ENCODE measurements at regions of chr10 and their contacts with region 1.

Region 1: DNA sequence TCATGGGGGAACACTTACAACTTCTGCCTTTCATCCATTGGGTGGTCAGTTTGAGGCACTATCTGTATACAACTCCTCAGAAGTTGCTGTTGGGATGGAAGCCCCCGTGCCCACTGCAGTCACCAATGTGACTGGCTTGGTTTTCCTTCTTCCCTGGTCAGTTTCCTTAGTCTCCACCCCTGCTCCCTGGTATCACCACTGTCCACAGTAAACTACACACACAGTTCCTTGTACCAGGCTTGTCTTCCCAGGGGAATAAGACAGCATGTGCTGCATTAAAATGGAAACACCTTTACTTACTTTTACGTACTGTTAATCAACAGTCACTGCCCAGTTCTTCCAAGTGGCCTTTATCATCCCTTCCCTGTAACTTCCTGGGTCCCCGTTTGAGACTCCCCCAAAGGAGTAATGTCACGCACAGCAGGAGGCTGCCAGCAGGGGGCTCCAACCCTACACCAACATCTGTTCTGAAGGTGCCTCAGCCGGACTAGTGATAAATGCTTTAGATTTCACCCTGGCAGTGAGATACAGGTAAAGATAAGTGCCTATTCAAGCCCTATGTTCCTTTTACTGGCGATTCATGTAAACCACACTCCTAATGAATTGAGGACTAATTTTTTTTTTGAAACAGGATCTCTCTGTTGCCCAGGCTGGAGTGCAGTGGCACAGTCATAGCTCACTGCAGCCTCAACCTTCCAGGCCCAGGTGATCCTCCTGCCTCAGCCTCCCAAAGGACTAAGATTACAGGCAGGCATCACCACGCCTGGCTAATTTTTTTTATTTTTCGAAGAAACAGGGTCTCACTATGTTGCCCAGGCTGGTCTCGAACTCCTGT is 45.3 kb upstream of the PIK3AP1 start:
- DNase-seq: peak; percentile 61 to 83 (median 70)
- ATAC-seq: peak; percentile 94
- H3K4me3 ChIP-seq: no peak overlapping the region
- H3K4me3 Mint-ChIP-seq: no peak overlapping the region
- H3K27ac ChIP-seq: no peak overlapping the region
- H3K27ac Mint-ChIP-seq: no peak overlapping the region
- H3K4me1 ChIP-seq: peaks cover 3% of the 10 kb centered on the region
- H3K4me1 Mint-ChIP-seq: no peaks in the 10 kb centered on the region
- H3K27me3 ChIP-seq: no peaks in the 10 kb centered on the region
- H3K27me3 Mint-ChIP-seq: peaks cover 4% of the 10 kb centered on the region
- CTCF ChIP-seq: peak; percentile 95

Region 2: DNA sequence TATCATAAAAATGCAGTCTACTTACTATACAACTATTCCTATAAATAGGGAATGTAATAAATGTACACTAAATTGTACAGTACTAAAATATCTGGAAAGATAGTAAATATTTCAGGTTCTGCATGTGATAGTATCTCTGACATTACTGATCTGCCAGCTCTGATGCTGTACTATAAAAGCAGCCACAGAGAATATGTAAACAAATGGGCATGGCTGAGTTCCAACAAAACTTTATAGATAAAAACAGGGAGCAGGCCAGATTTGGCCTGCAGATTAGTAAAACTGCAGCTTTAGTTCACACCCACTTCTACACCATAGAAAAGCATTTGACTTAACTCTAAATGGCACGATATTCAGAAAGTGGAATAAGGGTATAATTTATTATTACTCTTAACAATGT is 233.1 kb before region 1 on chr10:
- CTCF ChIA-PET with region 1: no interaction called
- POLR2A ChIA-PET with region 1: no interaction called
- intact Hi-C with region 1: no loop called
- DNase-seq: no peak
- ATAC-seq: no peak
- H3K4me3 ChIP-seq: no peak overlapping the region
- H3K4me3 Mint-ChIP-seq: no peak overlapping the region
- H3K27ac ChIP-seq: no peak overlapping the region
- H3K27ac Mint-ChIP-seq: no peak overlapping the region
- H3K4me1 ChIP-seq: no peaks in the 10 kb centered on the region
- H3K4me1 Mint-ChIP-seq: peaks cover 9% of the 10 kb centered on the region
- H3K27me3 ChIP-seq: no peaks in the 10 kb centered on the region
- H3K27me3 Mint-ChIP-seq: no peaks in the 10 kb centered on the region
- CTCF ChIP-seq: no peak

Region 3: GRCh38 chr10:97025613-97026242 is 260.1 kb after region 1 on chr10:
- CTCF ChIA-PET with region 1: interaction called, 3 read pairs
- POLR2A ChIA-PET with region 1: no interaction called
- intact Hi-C with region 1: loop called in 1 of 2 experiments (anchors 2 kb)
- DNase-seq: peak in 13 of 14 experiments; percentile 12 to 72 (median 32)
- ATAC-seq: no peak
- H3K4me3 ChIP-seq: no peak overlapping the region
- H3K4me3 Mint-ChIP-seq: no peak overlapping the region
- H3K27ac ChIP-seq: no peak overlapping the region
- H3K27ac Mint-ChIP-seq: no peak overlapping the region
- H3K4me1 ChIP-seq: no peaks in the 10 kb centered on the region
- H3K4me1 Mint-ChIP-seq: no peaks in the 10 kb centered on the region
- H3K27me3 ChIP-seq: no peaks in the 10 kb centered on the region
- H3K27me3 Mint-ChIP-seq: no peaks in the 10 kb centered on the region
- CTCF ChIP-seq: peak; percentile 68

Region 4: GRCh38 chr10:97196223-97197029 is 430.8 kb after region 1 on chr10:
- CTCF ChIA-PET with region 1: no interaction called
- POLR2A ChIA-PET with region 1: no interaction called
- intact Hi-C with region 1: loop called in 1 of 2 experiments (anchors 5 kb)
- DNase-seq: peak; percentile 36 to 81 (median 58)
- ATAC-seq: peak; percentile 86
- H3K4me3 ChIP-seq: peak overlapping the region; percentile 67
- H3K4me3 Mint-ChIP-seq: peak overlapping the region; percentile 90
- H3K27ac ChIP-seq: no peak overlapping the region
- H3K27ac Mint-ChIP-seq: peak overlapping the region; percentile 13
- H3K4me1 ChIP-seq: peaks cover 11% of the 10 kb centered on the region
- H3K4me1 Mint-ChIP-seq: peaks cover 8% of the 10 kb centered on the region
- H3K27me3 ChIP-seq: peaks cover 6 to 14% of the 10 kb centered on the region in 2 experiments
- H3K27me3 Mint-ChIP-seq: peaks cover 22% of the 10 kb centered on the region
- CTCF ChIP-seq: peak; percentile 89

Measured in CD4-positive, alpha-beta T cell (primary cell).